Astrocyte of the cerebellum (primary cell): ENCODE measurements at regions of chr2 and their contacts with region 1.

Region 1: GRCh38 chr2:30776831-30777635 is 30.2 kb downstream of the CAPN13 start:
- DNase-seq: no peak
- H3K4me3 ChIP-seq: no peak overlapping the region
- CTCF ChIP-seq: no peak

Region 2: DNA sequence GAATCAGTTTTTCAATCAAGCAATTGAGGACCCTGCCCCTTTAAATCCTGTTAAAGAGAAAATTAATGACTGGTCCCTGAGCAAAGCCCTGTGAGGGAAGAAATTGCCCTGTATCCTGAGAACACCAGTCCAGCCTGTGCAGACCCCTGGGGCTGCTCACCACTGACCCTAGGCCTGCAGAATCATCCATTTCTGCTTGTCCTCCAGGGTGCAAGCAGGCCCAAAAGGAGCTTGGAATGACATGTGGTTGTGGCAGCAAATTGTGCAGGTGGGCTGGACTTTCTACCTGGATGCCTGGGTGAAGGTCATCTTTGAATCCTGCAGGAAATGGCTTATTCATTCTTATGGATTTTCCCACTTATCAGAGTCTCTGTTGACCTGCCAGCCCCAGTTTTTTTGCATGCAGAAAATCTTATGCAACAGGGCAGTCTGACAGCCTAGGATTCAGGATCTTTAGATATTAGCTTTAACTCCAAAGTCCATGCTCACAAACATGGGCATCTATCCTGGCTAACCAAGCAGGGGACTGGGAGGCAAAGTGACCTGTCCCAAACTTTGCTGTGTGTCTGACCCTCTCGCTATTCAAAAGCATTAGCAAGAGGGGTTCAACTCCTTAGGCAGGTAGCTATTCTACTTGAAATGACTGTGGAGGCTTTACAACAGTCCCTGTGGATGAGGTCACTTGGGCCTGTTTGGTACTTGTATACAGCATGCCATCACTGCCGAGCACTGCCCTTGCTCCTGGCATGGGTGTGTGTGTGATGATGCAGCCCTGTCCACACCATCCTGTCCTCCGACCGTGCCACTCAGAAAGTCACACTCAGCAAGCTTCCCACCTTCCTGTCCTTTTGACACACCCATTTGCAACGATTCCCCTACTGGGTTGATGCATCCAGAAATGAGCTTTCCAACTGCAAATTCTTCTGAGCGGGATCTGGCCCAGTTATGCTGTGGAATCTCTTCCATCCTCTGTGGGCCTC is 55.1 kb before region 1 on chr2:
- in situ Hi-C with region 1: loop called (anchors 5 kb)
- DNase-seq: no peak
- H3K4me3 ChIP-seq: no peak overlapping the region
- CTCF ChIP-seq: no peak